Activated T-helper 1 cell treated with anti-CD3 and anti-CD28 coated beads, Interleukin-12 subunit alpha, Interleukin-12 subunit beta, Interleukin-2, Interleukin-4 antibody, amounts not matched to agents 30 ng/mL and 10 ng/mL and 1 ng/mL, durations not matched to agents 14 hours and 24 hours and 36 hours (primary cell): ENCODE measurements at regions of chr5 and their contacts with region 1.

Region 1: DNA sequence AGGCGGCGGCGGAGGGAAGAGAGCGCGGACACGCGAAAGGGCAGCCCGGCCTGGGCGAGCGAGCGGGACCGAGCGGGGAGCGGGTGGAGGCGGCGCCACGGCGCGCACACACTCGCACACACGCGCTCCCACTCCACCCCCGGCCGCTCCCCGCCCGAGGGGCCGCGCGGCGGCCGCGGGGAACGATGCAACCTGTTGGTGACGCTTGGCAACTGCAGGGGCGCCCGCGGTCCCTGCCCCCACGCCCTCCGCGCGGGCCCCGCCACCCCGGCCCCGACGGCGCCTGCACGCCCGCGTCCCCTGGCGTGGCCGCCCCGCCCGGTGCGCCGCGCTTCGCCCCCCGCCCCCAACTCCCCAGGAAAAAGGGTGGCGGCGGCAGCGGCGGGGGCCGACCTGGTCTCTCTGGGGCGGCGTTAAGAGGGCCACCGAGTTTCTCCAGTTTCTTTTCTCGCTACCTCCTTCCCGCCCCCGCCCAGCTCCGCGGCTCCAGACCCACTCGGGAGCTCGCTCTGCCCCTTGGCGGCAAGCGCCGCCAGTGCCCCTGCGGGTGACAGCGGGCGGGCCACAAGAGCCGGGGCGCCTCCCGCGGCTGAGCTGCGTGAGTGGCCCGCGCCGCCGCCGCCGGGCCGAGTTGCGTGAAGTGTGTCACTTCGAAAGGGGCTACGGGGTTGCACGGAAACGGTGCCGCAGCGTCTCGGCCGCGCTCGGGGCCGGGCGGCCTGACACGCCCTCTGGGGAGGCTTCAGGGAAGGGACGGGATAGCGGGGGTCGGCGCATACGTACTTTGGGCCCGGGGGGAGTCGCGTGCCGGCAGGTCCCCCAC is at the start of gene NR3C1:
- DNase-seq: peak; percentile 82
- H3K4me3 Mint-ChIP-seq: peak within 1 kb of the TSS; percentile 95
- H3K27ac Mint-ChIP-seq: peak within 1 kb of the TSS; percentile 99
- H3K4me1 Mint-ChIP-seq: peaks cover 48% of the 10 kb centered on the region
- H3K27me3 Mint-ChIP-seq: no peaks in the 10 kb centered on the region
- total RNA-seq, gene NR3C1: 62.7 TPM in 2 replicates

Region 2: DNA sequence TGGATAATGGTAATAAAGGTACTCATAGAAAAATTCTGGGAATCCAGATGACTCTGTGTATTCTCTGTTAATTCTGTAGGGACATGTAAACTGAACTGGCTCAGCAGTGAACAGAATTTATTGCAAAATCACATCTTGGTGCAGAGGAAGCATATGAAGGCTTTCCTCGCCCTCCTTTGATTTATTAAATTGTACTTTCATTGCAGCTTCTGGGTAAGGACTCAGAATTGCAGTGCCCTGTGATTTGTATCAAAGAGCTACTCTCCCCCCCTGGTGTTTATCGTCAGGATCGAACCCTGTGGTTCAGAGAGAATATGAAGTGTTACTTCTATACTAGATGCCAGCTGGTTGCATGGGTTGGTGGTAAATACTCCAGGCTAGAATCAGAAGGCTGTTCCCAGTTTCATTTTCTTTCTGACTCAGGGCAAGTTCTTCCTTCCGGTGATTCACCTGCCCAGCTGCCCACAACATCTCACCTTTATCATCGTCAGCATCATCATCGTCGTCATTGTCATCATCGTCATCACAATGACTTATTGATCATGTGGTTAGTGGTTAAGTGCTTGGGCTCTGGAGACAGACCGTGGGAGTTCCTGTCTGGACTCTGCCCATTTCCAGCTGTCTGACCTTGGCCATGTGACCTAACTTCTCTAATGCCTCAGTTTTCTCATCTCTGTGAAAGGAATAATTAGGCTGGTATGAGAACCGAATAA is 394.8 kb before region 1 on chr5:
- intact Hi-C with region 1: loop called (anchors 1 kb)
- DNase-seq: peak; percentile 82
- H3K4me3 Mint-ChIP-seq: peak overlapping the region; percentile 24
- H3K27ac Mint-ChIP-seq: peak overlapping the region; percentile 86
- H3K4me1 Mint-ChIP-seq: peaks cover 79% of the 10 kb centered on the region
- H3K27me3 Mint-ChIP-seq: no peaks in the 10 kb centered on the region

Region 3: GRCh38 chr5:143057580-143057999 is 346.2 kb before region 1 on chr5:
- intact Hi-C with region 1: loop called (anchors 1 kb)
- DNase-seq: no peak
- H3K4me3 Mint-ChIP-seq: no peak overlapping the region
- H3K27ac Mint-ChIP-seq: peak overlapping the region; percentile 97
- H3K4me1 Mint-ChIP-seq: peaks cover 77% of the 10 kb centered on the region
- H3K27me3 Mint-ChIP-seq: no peaks in the 10 kb centered on the region

Region 4: GRCh38 chr5:143222287-143223231 is 181.2 kb before region 1 on chr5:
- intact Hi-C with region 1: loop called (anchors 2 kb)
- DNase-seq: peak; percentile 59
- H3K4me3 Mint-ChIP-seq: peak overlapping the region; percentile 60
- H3K27ac Mint-ChIP-seq: peak overlapping the region; percentile 92
- H3K4me1 Mint-ChIP-seq: peaks cover 77% of the 10 kb centered on the region
- H3K27me3 Mint-ChIP-seq: no peaks in the 10 kb centered on the region

Region 5: GRCh38 chr5:143605403-143606005 is 201.7 kb after region 1 on chr5:
- intact Hi-C with region 1: loop called (anchors 1 kb)
- DNase-seq: peak; percentile 25
- H3K4me3 Mint-ChIP-seq: peak overlapping the region; percentile 56
- H3K27ac Mint-ChIP-seq: peak overlapping the region; percentile 91
- H3K4me1 Mint-ChIP-seq: peaks cover 38% of the 10 kb centered on the region
- H3K27me3 Mint-ChIP-seq: no peaks in the 10 kb centered on the region

Region 6: GRCh38 chr5:143968011-143968878 is 564.4 kb after region 1 on chr5:
- intact Hi-C with region 1: loop called (anchors 2 kb)
- DNase-seq: no peak
- H3K4me3 Mint-ChIP-seq: no peak overlapping the region
- H3K27ac Mint-ChIP-seq: no peak overlapping the region
- H3K4me1 Mint-ChIP-seq: no peaks in the 10 kb centered on the region
- H3K27me3 Mint-ChIP-seq: peaks cover 17% of the 10 kb centered on the region